Caco-2 (cell line): ENCODE measurements at regions of chr11 and their contacts with region 1.

Region 1: DNA sequence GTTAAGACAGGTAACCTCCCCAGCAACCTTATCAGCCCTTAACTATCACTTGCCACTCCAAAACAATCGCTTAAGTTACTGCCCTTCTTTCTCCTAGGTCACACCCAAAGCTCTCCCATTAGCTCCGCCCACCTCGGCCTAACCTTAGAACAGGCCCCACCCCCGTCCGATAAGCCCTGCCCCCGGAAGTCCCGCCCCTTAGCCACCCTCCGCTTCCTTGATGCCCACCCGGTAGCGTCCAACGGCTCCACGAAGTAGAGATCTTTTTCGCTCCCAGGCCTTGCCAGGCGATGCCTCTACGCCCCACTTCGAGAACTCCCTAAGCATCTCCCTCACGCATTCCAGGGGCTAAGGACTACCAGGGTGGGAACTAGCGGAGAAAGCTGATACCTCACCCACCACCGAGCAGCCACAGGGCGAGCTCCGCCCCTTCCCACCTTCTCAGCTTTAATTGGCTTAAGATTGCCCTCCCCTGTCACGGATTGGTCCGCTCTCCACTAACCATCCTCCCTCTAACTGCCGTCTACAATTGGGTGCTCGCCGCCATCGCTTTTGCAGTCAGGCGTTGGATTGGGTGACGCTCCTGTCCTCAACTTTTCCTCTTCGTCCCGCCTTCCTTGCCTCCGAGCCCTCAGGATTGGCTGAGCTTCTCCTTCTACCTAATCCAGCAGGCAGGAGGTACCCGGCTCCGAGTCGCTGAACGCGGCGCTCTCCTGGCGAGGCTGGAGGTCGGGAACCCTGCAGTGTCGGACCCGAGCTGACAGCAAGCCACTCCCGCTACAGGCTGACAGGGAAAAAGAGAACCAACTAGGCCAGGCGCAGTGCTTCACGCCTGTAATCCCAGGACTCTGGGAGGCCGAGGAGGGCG is at the start of gene ZBTB3:
- DNase-seq: peak; percentile 98 to 99
- H3K4me3 ChIP-seq: peak within 1 kb of the TSS; percentile 56
- H3K4me3 Mint-ChIP-seq: peak within 1 kb of the TSS; percentile 97
- H3K27ac Mint-ChIP-seq: peak within 1 kb of the TSS; percentile 95
- H3K4me1 ChIP-seq: peaks cover 9% of the 10 kb centered on the region; the same call in 1 of the 2 replicates
- H3K4me1 Mint-ChIP-seq: no peaks in the 10 kb centered on the region
- H3K27me3 ChIP-seq: no peaks in the 10 kb centered on the region
- H3K27me3 Mint-ChIP-seq: no peaks in the 10 kb centered on the region
- CTCF ChIP-seq: no peak
- total RNA-seq, gene ZBTB3: 8.2 and 10.9 TPM in 2 replicates

Region 2: GRCh38 chr11:62645956-62646824 is 107.8 kb before region 1 on chr11 and contains the start of gene GANAB:
- CTCF ChIA-PET with region 1: interaction called, 4 read pairs
- POLR2A ChIA-PET with region 1: interaction called, 11 read pairs
- intact Hi-C with region 1: no loop called
- DNase-seq: peak; percentile 99
- H3K4me3 ChIP-seq: peak within 1 kb of the TSS; percentile 66
- H3K4me3 Mint-ChIP-seq: peak within 1 kb of the TSS; percentile 91
- H3K27ac Mint-ChIP-seq: peak within 1 kb of the TSS; percentile 91
- H3K4me1 ChIP-seq: peaks cover 17% of the 10 kb centered on the region
- H3K4me1 Mint-ChIP-seq: no peaks in the 10 kb centered on the region
- H3K27me3 ChIP-seq: no peaks in the 10 kb centered on the region
- H3K27me3 Mint-ChIP-seq: no peaks in the 10 kb centered on the region
- CTCF ChIP-seq: no peak
- total RNA-seq, gene GANAB: 414 and 442 TPM in 2 replicates

Region 3: GRCh38 chr11:62687508-62688396 is 66.2 kb before region 1 on chr11:
- CTCF ChIA-PET with region 1: no interaction called
- POLR2A ChIA-PET with region 1: no interaction called
- intact Hi-C with region 1: no loop called
- DNase-seq: no peak
- H3K4me3 ChIP-seq: no peak overlapping the region
- H3K4me3 Mint-ChIP-seq: no peak overlapping the region
- H3K27ac Mint-ChIP-seq: no peak overlapping the region
- H3K4me1 ChIP-seq: no peaks in the 10 kb centered on the region
- H3K4me1 Mint-ChIP-seq: no peaks in the 10 kb centered on the region
- H3K27me3 ChIP-seq: no peaks in the 10 kb centered on the region
- H3K27me3 Mint-ChIP-seq: no peaks in the 10 kb centered on the region
- CTCF ChIP-seq: no peak

Region 4: DNA sequence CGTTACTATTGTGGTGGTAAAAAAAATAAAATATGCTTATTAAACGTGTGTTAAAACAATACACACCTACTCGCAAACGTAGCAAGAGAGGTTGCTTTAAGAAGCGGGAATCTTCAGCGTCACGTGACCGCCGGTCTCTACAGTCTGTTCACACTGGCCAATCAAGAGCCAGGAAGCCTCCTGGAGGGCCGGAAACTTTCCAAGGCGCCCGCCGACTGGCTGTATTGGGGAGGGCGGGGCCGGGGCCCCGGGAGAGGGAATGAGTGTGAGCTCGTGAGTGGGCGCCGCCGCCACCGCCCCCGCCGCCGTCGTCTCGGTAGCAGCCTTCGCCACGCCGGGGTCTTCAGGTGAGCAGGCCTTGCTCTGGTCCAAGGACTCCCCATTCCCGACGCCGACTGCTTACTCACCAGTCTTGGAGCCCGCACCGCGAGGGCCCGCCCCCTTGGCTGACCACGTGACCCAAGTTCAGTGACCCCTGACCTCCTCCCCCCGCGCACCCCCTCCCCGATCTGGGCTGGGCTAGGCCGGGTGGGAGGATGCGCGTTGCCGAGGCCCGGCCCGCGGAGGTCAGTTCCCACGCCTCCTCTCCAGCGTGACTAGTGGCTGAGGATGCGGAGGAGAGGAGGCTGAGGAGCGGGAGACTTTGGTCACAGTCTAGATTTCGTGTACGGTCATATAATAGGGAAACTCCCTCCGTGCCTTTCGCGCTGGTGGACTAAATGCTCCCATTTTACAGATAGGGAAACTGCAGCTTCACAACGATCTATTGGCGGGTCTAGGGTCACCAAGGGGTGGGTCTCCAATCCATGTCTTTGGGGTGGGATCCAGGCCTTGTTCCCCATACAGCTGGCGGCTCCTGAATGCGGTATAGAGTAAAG is 17.4 kb after region 1 on chr11 and contains the start of gene TAF6L:
- CTCF ChIA-PET with region 1: interaction called, 22 read pairs
- POLR2A ChIA-PET with region 1: interaction called, 18 read pairs
- intact Hi-C with region 1: no loop called
- DNase-seq: peak; percentile 97 to 99
- H3K4me3 ChIP-seq: peak within 1 kb of the TSS; percentile 81
- H3K4me3 Mint-ChIP-seq: peak within 1 kb of the TSS; percentile 92
- H3K27ac Mint-ChIP-seq: peak within 1 kb of the TSS; percentile 99
- H3K4me1 ChIP-seq: peaks cover 6% of the 10 kb centered on the region
- H3K4me1 Mint-ChIP-seq: no peaks in the 10 kb centered on the region
- H3K27me3 ChIP-seq: no peaks in the 10 kb centered on the region
- H3K27me3 Mint-ChIP-seq: no peaks in the 10 kb centered on the region
- CTCF ChIP-seq: no peak
- total RNA-seq, gene TAF6L: 26.8 and 30.1 TPM in 2 replicates

Region 5: GRCh38 chr11:62831520-62832335 is 77.8 kb after region 1 on chr11 and contains the start of gene STX5:
- CTCF ChIA-PET with region 1: no interaction called
- POLR2A ChIA-PET with region 1: interaction called, 16 read pairs
- intact Hi-C with region 1: no loop called
- DNase-seq: peak; percentile 99
- H3K4me3 ChIP-seq: peak within 1 kb of the TSS; percentile 66
- H3K4me3 Mint-ChIP-seq: peak within 1 kb of the TSS; percentile 90
- H3K27ac Mint-ChIP-seq: peak within 1 kb of the TSS; percentile 100
- H3K4me1 ChIP-seq: no peaks in the 10 kb centered on the region
- H3K4me1 Mint-ChIP-seq: peaks cover 5% of the 10 kb centered on the region
- H3K27me3 ChIP-seq: no peaks in the 10 kb centered on the region
- H3K27me3 Mint-ChIP-seq: no peaks in the 10 kb centered on the region
- CTCF ChIP-seq: no peak
- total RNA-seq, gene STX5: 39.9 and 44.2 TPM in 2 replicates

Region 6: GRCh38 chr11:62922658-62923431 is 168.9 kb after region 1 on chr11:
- CTCF ChIA-PET with region 1: no interaction called
- POLR2A ChIA-PET with region 1: no interaction called
- intact Hi-C with region 1: no loop called
- DNase-seq: no peak
- H3K4me3 ChIP-seq: no peak overlapping the region
- H3K4me3 Mint-ChIP-seq: no peak overlapping the region
- H3K27ac Mint-ChIP-seq: no peak overlapping the region
- H3K4me1 ChIP-seq: peaks cover 17% of the 10 kb centered on the region
- H3K4me1 Mint-ChIP-seq: peaks cover 15% of the 10 kb centered on the region
- H3K27me3 ChIP-seq: no peaks in the 10 kb centered on the region
- H3K27me3 Mint-ChIP-seq: no peaks in the 10 kb centered on the region
- CTCF ChIP-seq: peak in 1 of 2 experiments; percentile 14